SK-N-SH (cell line): ENCODE measurements at regions of chr19 and their contacts with region 1.

Region 1: GRCh38 chr19:2269244-2269947 is 12.6 kb downstream of the PEAK3 start:
- DNase-seq: peak; percentile 100
- H3K4me3 ChIP-seq: peak overlapping the region; percentile 91 to 100
- H3K27ac ChIP-seq: peak overlapping the region; percentile 87
- H3K4me1 ChIP-seq: peaks cover 8 to 32% of the 10 kb centered on the region in 2 experiments; a peak in 3 of 4 replicates
- H3K27me3 ChIP-seq: no peaks in the 10 kb centered on the region
- CTCF ChIP-seq: 0 out of 2 replicates have a peak, but pooled peaks have one; percentile 26
- EP300 ChIP-seq: no peak; a peak in 1 of 4 replicates
- RAD21 ChIP-seq: no peak

Region 2: GRCh38 chr19:2246801-2247361 is 22.5 kb before region 1 on chr19:
- CTCF ChIA-PET with region 1: interaction called, 121 read pairs
- POLR2A ChIA-PET with region 1: interaction called, 28 read pairs
- DNase-seq: peak; percentile 49
- H3K4me3 ChIP-seq: no peak overlapping the region
- H3K27ac ChIP-seq: peak overlapping the region; percentile 45 to 47; a peak in 3 of 4 replicates
- H3K4me1 ChIP-seq: peaks cover 6 to 48% of the 10 kb centered on the region in 2 experiments; a peak in 2 of 4 replicates
- H3K27me3 ChIP-seq: no peaks in the 10 kb centered on the region
- CTCF ChIP-seq: no peak
- EP300 ChIP-seq: no peak
- RAD21 ChIP-seq: no peak

Region 3: GRCh38 chr19:2253106-2254053 is 16.0 kb before region 1 on chr19:
- CTCF ChIA-PET with region 1: no interaction called
- POLR2A ChIA-PET with region 1: interaction called, 13 read pairs
- DNase-seq: peak; percentile 58
- H3K4me3 ChIP-seq: no peak overlapping the region
- H3K27ac ChIP-seq: no peak overlapping the region; a peak in 1 of 4 replicates
- H3K4me1 ChIP-seq: peaks cover 0 to 17% of the 10 kb centered on the region in 2 experiments; a peak in 1 of 4 replicates
- H3K27me3 ChIP-seq: no peaks in the 10 kb centered on the region
- CTCF ChIP-seq: peak; percentile 39
- EP300 ChIP-seq: no peak
- RAD21 ChIP-seq: no peak

Region 4: GRCh38 chr19:2289714-2290435 is 20.5 kb after region 1 on chr19:
- CTCF ChIA-PET with region 1: interaction called, 33 read pairs
- POLR2A ChIA-PET with region 1: interaction called, 6 read pairs
- DNase-seq: no peak
- H3K4me3 ChIP-seq: no peak overlapping the region
- H3K27ac ChIP-seq: no peak overlapping the region
- H3K4me1 ChIP-seq: peaks cover under 1 to 16% of the 10 kb centered on the region in 2 experiments; a peak in 1 of 4 replicates
- H3K27me3 ChIP-seq: peaks cover 37% of the 10 kb centered on the region
- CTCF ChIP-seq: no peak
- EP300 ChIP-seq: no peak
- RAD21 ChIP-seq: no peak

Region 5: DNA sequence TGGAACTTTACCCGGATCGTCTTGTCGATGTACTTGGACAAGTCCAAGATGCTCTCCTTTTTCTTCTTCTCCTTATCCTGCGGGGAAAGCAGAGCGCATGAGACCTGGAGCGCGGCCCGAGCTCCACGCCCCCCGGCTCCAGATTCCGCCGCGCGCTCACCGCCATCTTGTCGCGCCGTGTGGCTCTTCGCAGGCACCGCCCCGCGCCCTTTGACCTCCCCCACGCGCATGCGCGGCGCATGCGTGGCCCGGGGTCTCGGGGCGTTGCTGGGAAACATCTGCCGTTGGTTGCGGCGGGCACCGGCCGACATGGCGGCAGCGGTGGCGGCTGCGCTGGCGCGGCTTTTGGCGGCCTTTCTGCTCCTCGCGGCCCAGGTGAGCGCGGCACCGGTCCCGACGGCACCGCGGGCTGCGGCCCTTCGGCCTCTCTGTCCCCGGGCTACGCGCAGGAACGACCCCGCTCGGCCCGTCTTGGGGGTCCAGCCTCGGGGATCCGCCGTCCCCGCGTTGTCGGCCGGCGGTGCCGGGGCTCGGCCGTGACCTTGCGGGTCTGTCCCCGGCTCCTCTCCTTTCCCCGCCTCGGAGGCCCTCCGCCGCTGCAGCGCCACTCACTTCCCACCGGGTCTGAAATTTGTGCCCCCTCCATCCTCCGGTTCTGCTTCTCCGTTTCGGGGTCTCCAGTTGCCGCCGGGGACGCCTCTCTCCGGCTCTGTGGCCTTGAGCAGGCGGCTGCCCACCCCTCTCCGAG is 59.2 kb after region 1 on chr19 and contains the starts of genes LSM7 and SPPL2B:
- CTCF ChIA-PET with region 1: interaction called, 20 read pairs
- POLR2A ChIA-PET with region 1: no interaction called
- DNase-seq: peak; percentile 100
- H3K4me3 ChIP-seq: peak within 1 kb of the TSS; percentile 76 to 91
- H3K27ac ChIP-seq: peak within 1 kb of the TSS; percentile 67 to 84
- H3K4me1 ChIP-seq: peaks cover 6 to 14% of the 10 kb centered on the region in 2 experiments; a peak in 2 of 4 replicates
- H3K27me3 ChIP-seq: no peaks in the 10 kb centered on the region
- CTCF ChIP-seq: no peak
- EP300 ChIP-seq: no peak
- RAD21 ChIP-seq: no peak
- polyA plus RNA-seq, gene LSM7: 1,077 and 1,193 TPM in 2 replicates
- polyA plus RNA-seq, gene SPPL2B: 48.5 and 58.1 TPM in 2 replicates